Endothelial cell of umbilical vein (primary cell): ENCODE measurements at regions of chr10 and their contacts with region 1.

Region 1: DNA sequence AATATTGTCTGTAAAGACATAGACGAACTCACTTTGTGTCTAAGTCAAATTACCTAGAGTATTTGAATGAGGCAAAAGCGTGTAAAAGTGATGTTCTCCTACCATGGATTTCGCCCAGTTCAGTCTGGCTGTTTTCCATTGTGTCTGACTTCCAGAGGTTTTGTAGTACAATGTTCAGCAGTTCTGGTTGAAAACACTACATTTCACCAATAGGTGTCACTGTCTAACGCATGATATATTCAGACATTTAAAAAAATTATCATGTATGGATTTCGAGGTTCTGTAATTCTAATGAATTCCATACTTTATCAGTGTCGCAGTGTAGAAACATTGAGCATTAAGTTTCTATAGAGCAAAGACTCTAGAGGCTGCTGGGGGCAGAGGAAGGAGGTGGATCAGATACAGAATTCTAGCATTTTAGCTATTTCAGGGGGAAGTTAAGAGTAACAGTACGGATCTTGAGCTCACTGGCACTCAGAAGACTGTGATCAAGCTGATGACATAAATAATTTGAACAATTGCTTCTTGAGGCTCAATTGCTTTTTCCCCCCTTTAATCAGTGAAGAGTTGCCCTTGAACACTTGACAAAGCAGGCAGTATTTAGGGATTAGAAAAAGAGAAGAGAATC is 196.9 kb upstream of the RHOBTB1 start:
- DNase-seq: peak; percentile 88
- H3K4me3 ChIP-seq: no peak overlapping the region
- H3K27ac ChIP-seq: peak overlapping the region; percentile 12
- H3K4me1 ChIP-seq: peaks cover 21% of the 10 kb centered on the region
- H3K27me3 ChIP-seq: no peaks in the 10 kb centered on the region
- CTCF ChIP-seq: peak; percentile 51 to 55
- POLR2A ChIP-seq: no peak

Region 2: DNA sequence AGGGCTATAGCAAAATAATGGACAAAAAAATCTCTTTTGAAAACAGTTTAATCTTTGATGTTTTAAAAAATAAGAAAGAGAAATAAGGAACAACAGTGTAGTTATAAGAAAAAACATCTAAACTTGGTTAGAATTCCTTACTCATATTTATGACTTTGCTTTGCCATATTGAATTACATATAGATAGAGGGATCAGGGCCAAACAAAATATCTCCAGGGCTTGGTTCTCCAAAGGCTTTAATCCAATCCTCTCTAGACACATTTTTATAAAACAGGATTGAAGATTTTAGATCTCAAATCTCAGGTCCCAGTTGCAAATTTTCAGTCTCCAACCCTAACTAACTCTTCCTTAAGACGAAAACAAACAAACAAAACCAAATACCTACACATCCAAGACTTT is 124.2 kb before region 1 on chr10:
- CTCF ChIA-PET with region 1: no interaction called
- POLR2A ChIA-PET with region 1: no interaction called
- dilution Hi-C with region 1: no loop called
- intact Hi-C with region 1: no loop called
- DNase-seq: no peak
- H3K4me3 ChIP-seq: no peak overlapping the region
- H3K27ac ChIP-seq: no peak overlapping the region
- H3K4me1 ChIP-seq: peaks cover 3% of the 10 kb centered on the region
- H3K27me3 ChIP-seq: no peaks in the 10 kb centered on the region
- CTCF ChIP-seq: no peak
- POLR2A ChIP-seq: no peak

Region 3: GRCh38 chr10:61151059-61151458 is 10.2 kb after region 1 on chr10:
- CTCF ChIA-PET with region 1: interaction called, 21 read pairs
- POLR2A ChIA-PET with region 1: interaction called, 3 read pairs
- dilution Hi-C with region 1: no loop called
- intact Hi-C with region 1: no loop called
- DNase-seq: no peak
- H3K4me3 ChIP-seq: no peak overlapping the region
- H3K27ac ChIP-seq: no peak overlapping the region
- H3K4me1 ChIP-seq: no peaks in the 10 kb centered on the region
- H3K27me3 ChIP-seq: peaks cover 0 to 1% of the 10 kb centered on the region in 2 experiments
- CTCF ChIP-seq: no peak
- POLR2A ChIP-seq: no peak

Region 4: DNA sequence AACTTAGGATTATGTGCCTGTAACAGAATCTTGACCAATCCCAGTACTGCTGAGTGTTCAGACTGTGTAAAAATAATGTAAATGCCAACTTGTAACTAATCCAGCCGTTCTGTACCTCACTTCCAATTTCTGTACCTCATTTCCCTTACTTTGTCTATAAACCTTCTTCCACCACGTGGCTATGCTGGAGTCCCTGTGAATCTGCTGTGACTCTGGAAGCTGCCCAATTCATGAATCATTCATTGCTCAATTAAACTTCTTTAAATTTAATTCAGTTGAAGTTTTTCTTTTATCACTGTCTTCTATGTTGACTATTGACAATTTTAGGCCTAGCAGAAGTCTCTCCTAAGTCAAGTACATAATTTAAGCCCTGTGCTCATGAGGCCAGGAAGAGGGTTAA is 18.4 kb after region 1 on chr10:
- CTCF ChIA-PET with region 1: interaction called, 10 read pairs
- POLR2A ChIA-PET with region 1: no interaction called
- dilution Hi-C with region 1: no loop called
- intact Hi-C with region 1: no loop called
- DNase-seq: no peak
- H3K4me3 ChIP-seq: no peak overlapping the region
- H3K27ac ChIP-seq: no peak overlapping the region
- H3K4me1 ChIP-seq: no peaks in the 10 kb centered on the region
- H3K27me3 ChIP-seq: no peaks in the 10 kb centered on the region
- CTCF ChIP-seq: no peak
- POLR2A ChIP-seq: no peak

Region 5: DNA sequence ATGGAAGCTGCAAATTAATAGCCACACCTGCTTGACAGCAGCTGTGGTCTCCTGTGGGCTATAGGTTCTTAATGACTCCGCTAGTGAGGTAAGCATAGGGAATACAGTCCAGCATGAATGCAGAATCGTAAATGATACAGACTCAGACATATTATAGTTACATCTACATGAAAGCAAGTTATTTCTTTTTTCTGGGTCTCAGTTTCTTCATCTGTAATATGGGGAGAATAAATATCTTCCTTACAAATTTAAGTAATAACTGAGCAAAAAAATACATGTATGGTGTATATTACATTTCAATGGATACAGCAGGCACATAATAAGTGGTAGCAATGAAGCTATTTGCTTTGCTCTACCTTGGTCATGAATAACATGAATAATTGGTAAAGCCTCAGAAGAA is 49.0 kb after region 1 on chr10:
- CTCF ChIA-PET with region 1: interaction called, 15 read pairs
- POLR2A ChIA-PET with region 1: no interaction called
- dilution Hi-C with region 1: no loop called
- intact Hi-C with region 1: no loop called
- DNase-seq: no peak
- H3K4me3 ChIP-seq: no peak overlapping the region
- H3K27ac ChIP-seq: no peak overlapping the region
- H3K4me1 ChIP-seq: no peaks in the 10 kb centered on the region
- H3K27me3 ChIP-seq: no peaks in the 10 kb centered on the region
- CTCF ChIP-seq: no peak
- POLR2A ChIP-seq: no peak